PC-3 (cell line): ENCODE measurements at regions of chr14 and their contacts with region 1.

Region 1: GRCh38 chr14:78933948-78934524 is 763.9 kb downstream of the NRXN3 start:
- DNase-seq: peak; percentile 45
- ATAC-seq: no peak
- H3K4me3 ChIP-seq: no peak overlapping the region
- H3K27ac ChIP-seq: no peak overlapping the region
- H3K4me1 ChIP-seq: no peaks in the 10 kb centered on the region
- H3K27me3 ChIP-seq: no peaks in the 10 kb centered on the region
- CTCF ChIP-seq: peak; percentile 73

Region 2: DNA sequence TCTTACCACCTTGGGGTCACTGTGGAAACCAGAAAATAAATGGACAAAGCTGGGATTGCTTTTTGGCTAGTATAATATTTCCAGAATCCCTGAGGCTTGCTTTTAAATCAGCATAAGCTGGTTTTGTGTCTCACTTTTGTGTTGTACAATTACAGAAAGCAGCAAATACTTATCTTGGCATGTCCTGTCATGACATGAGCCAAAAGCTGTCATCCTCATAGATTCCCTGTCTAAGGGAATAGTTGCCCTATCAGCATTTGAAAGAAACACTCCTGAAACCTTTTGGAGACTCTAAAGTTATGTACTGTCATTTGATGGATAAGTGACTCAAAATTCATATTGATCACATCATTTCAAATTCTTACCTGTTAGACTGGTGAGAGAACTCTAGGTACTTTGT is 223.3 kb after region 1 on chr14:
- CTCF ChIA-PET with region 1: interaction called, 14 read pairs
- POLR2A ChIA-PET with region 1: no interaction called
- intact Hi-C with region 1: no loop called
- DNase-seq: no peak
- ATAC-seq: no peak
- H3K4me3 ChIP-seq: no peak overlapping the region
- H3K27ac ChIP-seq: no peak overlapping the region
- H3K4me1 ChIP-seq: no peaks in the 10 kb centered on the region
- H3K27me3 ChIP-seq: no peaks in the 10 kb centered on the region
- CTCF ChIP-seq: no peak

Region 3: DNA sequence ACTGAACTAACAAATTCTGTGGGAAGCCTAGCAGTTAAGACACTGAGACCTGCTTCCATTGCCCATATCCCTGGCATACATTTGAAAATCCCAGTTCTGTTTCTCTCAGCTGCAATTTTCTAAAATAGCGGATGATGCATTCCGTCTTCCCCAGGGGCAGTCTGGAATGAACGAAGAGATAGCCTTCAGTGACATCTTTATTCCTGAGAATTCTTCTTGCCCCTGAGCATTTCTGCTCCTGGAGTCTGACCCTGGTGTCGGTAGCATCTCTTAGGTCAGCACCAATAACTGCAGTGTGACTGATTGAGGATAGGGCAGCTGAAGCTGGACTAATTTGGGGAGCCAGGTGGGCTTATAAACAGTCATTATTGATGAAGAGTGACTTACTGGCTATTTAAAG is 724.7 kb after region 1 on chr14:
- CTCF ChIA-PET with region 1: interaction called, 14 read pairs
- POLR2A ChIA-PET with region 1: no interaction called
- intact Hi-C with region 1: no loop called
- DNase-seq: no peak
- ATAC-seq: no peak
- H3K4me3 ChIP-seq: no peak overlapping the region
- H3K27ac ChIP-seq: no peak overlapping the region
- H3K4me1 ChIP-seq: no peaks in the 10 kb centered on the region
- H3K27me3 ChIP-seq: no peaks in the 10 kb centered on the region
- CTCF ChIP-seq: no peak

Region 4: GRCh38 chr14:80047761-80048160 is 1113.7 kb after region 1 on chr14:
- CTCF ChIA-PET with region 1: interaction called, 11 read pairs
- POLR2A ChIA-PET with region 1: no interaction called
- intact Hi-C with region 1: no loop called
- DNase-seq: no peak
- ATAC-seq: no peak
- H3K4me3 ChIP-seq: no peak overlapping the region
- H3K27ac ChIP-seq: no peak overlapping the region
- H3K4me1 ChIP-seq: no peaks in the 10 kb centered on the region
- H3K27me3 ChIP-seq: no peaks in the 10 kb centered on the region
- CTCF ChIP-seq: no peak

Region 5: DNA sequence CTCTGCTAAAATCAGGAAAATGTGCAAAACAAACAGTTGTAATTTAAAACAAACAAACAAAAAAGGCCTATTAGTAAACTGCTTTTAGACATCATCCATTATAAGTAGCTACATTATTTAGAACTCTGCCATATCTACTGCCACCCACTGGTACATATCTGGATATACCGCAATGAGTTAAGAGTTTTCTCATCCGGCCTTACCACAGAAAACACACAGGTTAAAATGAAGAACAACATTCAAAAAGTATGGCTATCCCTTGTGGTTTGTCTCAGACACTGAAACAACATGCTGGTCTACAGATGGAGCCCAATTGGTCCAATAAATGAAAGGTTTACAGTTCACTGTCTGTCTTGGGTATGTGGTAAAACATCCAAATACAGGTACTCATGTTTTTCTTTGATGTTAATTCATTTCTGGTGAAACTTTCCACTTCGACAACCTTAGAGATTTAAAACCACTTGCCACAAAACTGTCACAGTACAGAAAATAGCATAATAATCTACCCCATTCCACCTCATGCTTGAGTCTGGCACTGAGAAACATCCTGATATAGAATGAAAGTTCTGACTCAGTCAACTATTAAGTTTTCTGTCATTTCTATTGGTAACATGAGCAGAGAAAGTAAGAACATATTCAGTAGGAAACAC is 1653.2 kb after region 1 on chr14:
- CTCF ChIA-PET with region 1: interaction called, 12 read pairs
- POLR2A ChIA-PET with region 1: no interaction called
- intact Hi-C with region 1: no loop called
- DNase-seq: peak; percentile 66
- ATAC-seq: peak; percentile 35; the same call in 1 of the 2 replicates
- H3K4me3 ChIP-seq: no peak overlapping the region
- H3K27ac ChIP-seq: peak overlapping the region; percentile 9; the same call in 1 of the 2 replicates
- H3K4me1 ChIP-seq: peaks cover 36% of the 10 kb centered on the region
- H3K27me3 ChIP-seq: no peaks in the 10 kb centered on the region
- CTCF ChIP-seq: peak; percentile 83